ENCODE measurements at regions of chr15 and their contacts with region 1.

Region 1: GRCh38 chr15:52558196-52558595 is 10.6 kb downstream of the ARPP19 start:
- DNase-seq: peak; percentile 61
- H3K4me3 Mint-ChIP-seq: peak overlapping the region; percentile 64
- H3K27ac Mint-ChIP-seq: peak overlapping the region; percentile 87
- H3K4me1 Mint-ChIP-seq: peaks cover 72% of the 10 kb centered on the region
- H3K27me3 Mint-ChIP-seq: no peaks in the 10 kb centered on the region

Region 2: GRCh38 chr15:52005748-52006701 is 552.2 kb before region 1 on chr15:
- intact Hi-C with region 1: loop called (anchors 2 kb)
- DNase-seq: no peak
- H3K4me3 Mint-ChIP-seq: peak overlapping the region; percentile 28
- H3K27ac Mint-ChIP-seq: peak overlapping the region; percentile 80
- H3K4me1 Mint-ChIP-seq: peaks cover 70% of the 10 kb centered on the region
- H3K27me3 Mint-ChIP-seq: no peaks in the 10 kb centered on the region

Region 3: DNA sequence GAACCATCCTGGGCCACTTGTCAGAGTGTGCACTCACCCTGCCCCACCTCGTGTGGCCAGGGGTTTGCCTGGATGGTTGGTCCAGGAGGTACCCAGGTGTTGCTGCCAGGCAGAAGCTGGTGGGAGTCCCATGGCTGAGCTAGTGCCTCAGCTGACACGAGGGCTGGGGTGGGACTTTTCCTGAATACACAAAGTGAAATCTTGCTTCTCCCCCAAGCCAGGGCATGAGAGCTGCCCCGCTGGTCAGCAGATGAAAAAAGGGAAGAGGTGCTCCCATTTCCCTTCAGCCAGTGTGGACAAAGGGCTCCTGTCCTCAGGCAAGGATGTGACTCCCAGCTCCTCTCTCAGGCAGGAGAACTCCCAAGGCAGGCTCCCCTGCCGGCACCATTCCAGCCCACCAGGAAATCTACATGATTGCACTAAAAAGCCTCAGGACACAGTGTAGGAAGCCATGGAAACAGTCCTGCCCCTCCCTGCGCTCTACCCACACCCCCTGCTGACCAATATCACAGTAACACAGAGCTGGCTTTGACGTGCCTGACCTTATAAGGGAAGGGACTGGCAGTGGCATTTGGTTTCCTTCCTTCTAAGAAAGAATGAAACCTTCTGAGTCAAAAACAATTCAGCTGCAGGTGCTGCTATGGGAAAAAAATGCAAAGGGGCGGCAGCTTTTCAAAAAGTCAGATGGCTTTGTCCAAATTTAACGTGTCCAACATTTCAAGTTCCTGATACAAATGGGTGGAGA is 296.5 kb before region 1 on chr15:
- intact Hi-C with region 1: loop called (anchors 1 kb)
- DNase-seq: peak; percentile 63
- H3K4me3 Mint-ChIP-seq: peak overlapping the region; percentile 68
- H3K27ac Mint-ChIP-seq: peak overlapping the region; percentile 90
- H3K4me1 Mint-ChIP-seq: peaks cover 44% of the 10 kb centered on the region
- H3K27me3 Mint-ChIP-seq: no peaks in the 10 kb centered on the region

Region 4: GRCh38 chr15:52379395-52380106 is 178.6 kb before region 1 on chr15:
- intact Hi-C with region 1: loop called (anchors 2 kb)
- DNase-seq: no peak
- H3K4me3 Mint-ChIP-seq: no peak overlapping the region
- H3K27ac Mint-ChIP-seq: peak overlapping the region; percentile 43
- H3K4me1 Mint-ChIP-seq: peaks cover 30% of the 10 kb centered on the region
- H3K27me3 Mint-ChIP-seq: no peaks in the 10 kb centered on the region

Region 5: DNA sequence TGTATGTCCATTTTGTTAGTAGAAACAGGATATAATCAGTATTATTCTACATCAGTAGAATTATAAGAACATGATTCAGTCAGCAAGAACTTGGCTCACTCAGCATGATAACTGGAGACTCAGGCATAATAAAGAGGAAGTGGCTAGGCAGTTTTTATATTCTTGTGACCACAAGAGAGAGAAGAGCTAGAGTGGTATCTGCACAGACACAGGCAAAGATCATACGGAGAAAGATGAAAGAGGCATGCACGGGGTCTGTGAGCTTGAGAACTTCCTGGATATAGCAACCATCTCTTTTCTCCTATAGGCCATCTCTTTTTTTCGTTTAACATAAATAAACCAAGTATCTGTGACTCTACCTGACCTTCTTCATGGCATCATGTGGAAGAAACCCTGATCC is 76.3 kb before region 1 on chr15:
- intact Hi-C with region 1: loop called (anchors 5 kb)
- DNase-seq: peak; percentile 49
- H3K4me3 Mint-ChIP-seq: peak overlapping the region; percentile 49
- H3K27ac Mint-ChIP-seq: peak overlapping the region; percentile 81
- H3K4me1 Mint-ChIP-seq: peaks cover 63% of the 10 kb centered on the region
- H3K27me3 Mint-ChIP-seq: peaks cover 5% of the 10 kb centered on the region

Region 6: DNA sequence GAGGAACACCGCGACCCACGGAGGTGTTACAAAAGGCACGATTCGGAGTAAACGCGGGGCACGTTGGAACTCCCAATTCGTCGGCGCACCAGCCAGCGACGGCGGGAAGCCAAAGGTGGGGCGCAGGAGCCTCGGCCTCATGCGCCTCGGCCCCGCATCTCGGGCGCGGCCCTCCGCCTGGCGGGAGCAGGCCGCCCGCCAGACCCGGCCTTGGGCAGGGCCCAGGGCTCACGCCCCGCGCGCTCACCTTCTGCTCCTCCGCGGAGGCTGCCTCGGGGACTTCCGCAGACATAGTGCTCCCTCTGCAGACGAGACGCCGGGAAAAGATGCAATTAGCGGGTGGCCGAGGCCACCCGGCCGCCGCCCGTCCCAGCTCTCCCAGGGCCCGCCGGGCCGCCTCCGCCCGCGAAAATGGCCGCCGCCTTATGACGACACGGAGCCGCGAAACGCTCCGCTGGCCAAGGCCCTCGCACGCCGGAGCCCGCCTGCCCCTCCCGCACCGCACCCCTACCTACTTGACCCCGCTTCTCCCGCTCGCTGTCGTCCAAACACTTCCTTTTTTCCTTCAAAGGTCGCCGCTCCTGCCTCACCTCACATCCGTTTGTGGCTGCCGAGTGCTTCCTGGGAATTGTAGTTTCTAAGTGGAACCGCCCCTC is 10.5 kb after region 1 on chr15 and contains the start of gene ARPP19:
- intact Hi-C with region 1: loop called (anchors 1 kb)
- DNase-seq: peak; percentile 75
- H3K4me3 Mint-ChIP-seq: peak within 1 kb of the TSS; percentile 92
- H3K27ac Mint-ChIP-seq: peak within 1 kb of the TSS; percentile 99
- H3K4me1 Mint-ChIP-seq: peaks cover 43% of the 10 kb centered on the region
- H3K27me3 Mint-ChIP-seq: peaks cover 2% of the 10 kb centered on the region
- total RNA-seq, gene ARPP19: 195 and 216 TPM in 2 replicates